CD4-positive, alpha-beta T cell (primary cell): ENCODE measurements at regions of chr5 and their contacts with region 1.

Region 1: DNA sequence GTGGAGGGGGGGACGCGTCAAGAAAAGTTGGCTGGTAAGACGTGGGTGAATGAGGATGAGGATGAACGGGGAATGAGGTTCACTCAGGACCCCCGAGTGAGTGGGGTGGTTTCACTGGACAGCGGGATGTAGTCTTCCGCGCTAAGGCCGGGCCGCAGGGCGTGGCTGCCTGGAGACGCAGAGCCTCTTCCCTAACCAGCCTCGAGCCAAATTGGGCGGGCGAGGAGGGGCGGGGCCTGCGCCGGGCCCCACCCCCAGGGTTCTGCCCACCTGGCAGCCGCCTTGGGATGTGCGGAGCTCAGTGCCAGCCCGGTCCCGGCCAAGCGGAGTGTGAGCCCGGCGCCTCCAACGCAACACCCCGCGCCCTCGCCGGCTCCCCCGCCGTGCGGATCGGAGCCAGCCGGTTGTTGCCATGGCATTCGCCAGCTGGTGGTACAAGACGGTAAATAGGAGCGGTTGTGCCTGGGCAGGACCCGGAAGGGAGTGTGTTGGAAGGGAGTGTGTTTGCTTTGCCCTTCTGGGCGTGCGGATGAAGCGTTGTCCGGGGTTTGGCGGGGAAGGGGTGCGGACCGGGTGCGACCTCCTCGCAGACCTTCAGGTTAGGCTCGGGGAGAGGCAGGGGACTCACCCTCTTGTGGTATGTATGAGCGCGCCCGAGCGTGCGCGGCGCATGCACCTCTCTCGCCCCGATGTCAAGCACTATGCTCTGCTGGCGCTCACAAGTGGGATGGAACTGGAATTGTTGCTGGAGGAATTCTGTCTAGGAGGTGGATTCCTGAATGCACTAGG is 743 bp downstream of the CAST start:
- DNase-seq: peak; percentile 55 to 93 (median 80)
- ATAC-seq: peak; percentile 72
- H3K4me3 ChIP-seq: peak overlapping the region; percentile 88
- H3K4me3 Mint-ChIP-seq: peak overlapping the region; percentile 96
- H3K27ac ChIP-seq: peak overlapping the region; percentile 68 to 77
- H3K27ac Mint-ChIP-seq: peak overlapping the region; percentile 95
- H3K4me1 ChIP-seq: peaks cover 25% of the 10 kb centered on the region
- H3K4me1 Mint-ChIP-seq: peaks cover 57% of the 10 kb centered on the region
- H3K27me3 ChIP-seq: no peaks in the 10 kb centered on the region
- H3K27me3 Mint-ChIP-seq: no peaks in the 10 kb centered on the region
- CTCF ChIP-seq: no peak

Region 2: DNA sequence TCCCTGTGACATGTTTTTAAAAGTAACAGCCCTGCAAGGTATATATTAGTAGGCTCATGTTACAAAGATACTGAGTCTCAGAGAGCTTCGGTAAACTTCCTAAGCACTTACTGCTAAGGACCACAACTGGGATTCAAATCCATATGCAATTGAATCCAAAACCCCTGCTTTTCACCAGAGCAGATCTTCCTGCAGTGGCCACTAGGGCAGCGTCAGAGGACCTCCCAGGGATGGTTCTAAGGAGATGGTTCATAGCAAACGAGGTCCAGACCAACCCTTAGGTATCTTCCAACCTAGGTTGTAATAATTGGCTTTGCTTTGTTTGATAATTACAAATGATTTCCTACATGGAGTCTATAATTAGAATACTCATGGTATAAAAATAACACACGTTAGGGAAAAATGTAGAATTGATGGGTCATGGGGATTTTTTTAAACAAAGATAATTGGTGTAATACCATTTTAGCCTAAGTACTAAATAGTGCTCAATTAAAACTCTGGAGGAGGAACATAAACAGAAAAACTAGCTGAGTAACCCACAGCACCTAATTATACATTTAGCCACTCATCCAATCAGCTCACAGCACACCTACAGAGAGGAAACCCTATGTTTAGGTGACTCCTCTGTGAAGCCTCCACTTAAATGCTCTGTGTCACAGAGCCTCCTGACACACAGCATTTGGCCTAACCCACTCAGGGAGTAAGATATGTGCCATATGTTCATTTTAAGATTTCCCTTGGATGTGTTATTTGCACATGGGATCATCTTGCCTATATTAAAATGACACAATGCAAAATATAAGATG is 10.8 kb before region 1 on chr5:
- CTCF ChIA-PET with region 1: no interaction called
- POLR2A ChIA-PET with region 1: interaction called, 10 read pairs
- intact Hi-C with region 1: no loop called
- DNase-seq: peak in 3 of 14 experiments; percentile 26 to 38 (median 26)
- ATAC-seq: peak; percentile 59
- H3K4me3 ChIP-seq: no peak overlapping the region
- H3K4me3 Mint-ChIP-seq: no peak overlapping the region
- H3K27ac ChIP-seq: no peak overlapping the region
- H3K27ac Mint-ChIP-seq: no peak overlapping the region
- H3K4me1 ChIP-seq: peaks cover 12% of the 10 kb centered on the region
- H3K4me1 Mint-ChIP-seq: peaks cover 7% of the 10 kb centered on the region
- H3K27me3 ChIP-seq: no peaks in the 10 kb centered on the region
- H3K27me3 Mint-ChIP-seq: peaks cover 25% of the 10 kb centered on the region
- CTCF ChIP-seq: peak; percentile 23

Region 3: DNA sequence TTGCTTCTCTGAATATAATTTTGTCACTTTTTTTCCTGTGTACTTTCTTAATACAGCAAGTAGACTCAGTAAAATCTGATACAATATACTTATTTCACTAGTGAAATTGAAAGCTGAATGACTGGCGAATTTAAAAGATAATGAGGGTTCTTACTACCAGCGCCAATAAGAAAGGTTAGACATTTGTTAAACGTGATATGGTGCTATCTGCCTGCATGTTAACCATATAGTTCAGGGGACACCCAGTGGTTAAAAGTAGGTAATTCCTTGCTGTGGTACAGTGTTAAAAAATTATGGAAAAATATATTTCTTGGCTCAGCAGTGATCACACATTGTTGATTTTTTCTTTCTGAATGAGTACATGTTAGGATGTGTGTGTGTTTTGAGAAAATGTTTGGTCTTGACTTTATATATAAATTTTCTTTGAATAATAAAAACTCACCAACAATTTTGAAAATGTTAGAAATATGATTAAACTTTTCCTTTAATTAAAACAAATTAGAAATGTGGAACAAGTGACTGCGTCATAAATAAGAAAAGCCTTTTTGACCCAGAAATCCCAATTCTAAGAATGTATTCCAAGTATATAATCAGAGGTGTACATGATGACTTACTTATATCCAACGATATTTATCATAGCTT is 25.0 kb after region 1 on chr5:
- CTCF ChIA-PET with region 1: no interaction called
- POLR2A ChIA-PET with region 1: interaction called, 4 read pairs
- intact Hi-C with region 1: loop called in 1 of 2 experiments (anchors 2 kb)
- DNase-seq: peak in 3 of 14 experiments; percentile 44 to 59 (median 59)
- ATAC-seq: peak; percentile 99
- H3K4me3 ChIP-seq: no peak overlapping the region
- H3K4me3 Mint-ChIP-seq: peak overlapping the region; percentile 48
- H3K27ac ChIP-seq: no peak overlapping the region
- H3K27ac Mint-ChIP-seq: no peak overlapping the region
- H3K4me1 ChIP-seq: peaks cover 3% of the 10 kb centered on the region
- H3K4me1 Mint-ChIP-seq: peaks cover 30% of the 10 kb centered on the region
- H3K27me3 ChIP-seq: no peaks in the 10 kb centered on the region
- H3K27me3 Mint-ChIP-seq: no peaks in the 10 kb centered on the region
- CTCF ChIP-seq: peak; percentile 68

Region 4: DNA sequence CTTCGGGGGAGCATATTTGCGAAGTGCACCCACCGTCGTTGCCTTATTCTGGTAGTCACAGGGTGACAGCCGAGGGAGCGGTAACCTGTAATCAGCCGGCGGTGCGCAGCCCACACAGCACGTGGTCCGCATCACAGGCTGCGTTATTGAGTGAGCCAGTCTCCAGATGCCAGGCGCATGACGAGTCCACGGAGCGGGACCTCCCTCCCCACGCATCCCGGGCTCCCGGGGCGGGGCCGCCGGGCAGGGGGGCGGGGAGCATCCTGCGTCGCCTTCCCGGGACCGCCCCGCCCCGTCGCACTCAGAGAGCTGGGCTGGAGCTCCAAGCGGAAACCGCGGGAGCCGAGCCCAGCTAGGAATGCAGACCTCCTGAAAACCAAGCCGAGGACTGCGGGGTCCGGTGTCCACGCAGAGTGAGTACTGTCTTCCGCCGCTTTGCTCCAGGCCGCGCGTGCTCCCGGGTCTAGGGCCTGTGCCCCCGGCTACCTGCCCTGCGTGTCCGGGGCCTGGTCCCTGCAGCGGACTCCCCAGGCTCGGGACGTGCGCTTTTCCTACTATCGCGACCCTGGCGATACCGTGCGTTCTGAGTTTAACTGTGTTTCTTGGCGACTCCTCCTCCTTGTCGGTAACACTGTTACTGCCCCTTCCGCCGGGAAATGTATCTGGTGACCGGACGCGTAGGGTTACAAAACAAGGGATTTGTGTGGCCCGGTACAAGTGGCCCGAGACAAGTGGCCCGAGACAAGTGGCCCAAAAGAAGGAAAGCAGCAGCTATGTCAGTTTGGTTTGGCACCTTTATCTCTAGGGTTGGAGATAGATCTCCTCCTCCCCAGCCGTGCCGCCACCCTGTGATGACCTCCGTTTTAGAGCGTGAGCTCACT is 39.8 kb after region 1 on chr5:
- CTCF ChIA-PET with region 1: interaction called, 9 read pairs
- POLR2A ChIA-PET with region 1: interaction called, 37 read pairs
- intact Hi-C with region 1: loop called (anchors 1 to 5 kb)
- DNase-seq: peak; percentile 50 to 90 (median 70)
- ATAC-seq: peak; percentile 81
- H3K4me3 ChIP-seq: peak overlapping the region; percentile 64
- H3K4me3 Mint-ChIP-seq: peak overlapping the region; percentile 90
- H3K27ac ChIP-seq: peak overlapping the region; percentile 69 to 91
- H3K27ac Mint-ChIP-seq: peak overlapping the region; percentile 87
- H3K4me1 ChIP-seq: peaks cover 23% of the 10 kb centered on the region
- H3K4me1 Mint-ChIP-seq: peaks cover 45% of the 10 kb centered on the region
- H3K27me3 ChIP-seq: no peaks in the 10 kb centered on the region
- H3K27me3 Mint-ChIP-seq: no peaks in the 10 kb centered on the region
- CTCF ChIP-seq: no peak

Region 5: GRCh38 chr5:96714951-96715451 is 52.1 kb after region 1 on chr5:
- CTCF ChIA-PET with region 1: no interaction called
- POLR2A ChIA-PET with region 1: interaction called, 8 read pairs
- intact Hi-C with region 1: loop called in 1 of 2 experiments (anchors 5 kb)
- DNase-seq: peak in 8 of 14 experiments; percentile 16 to 82 (median 40)
- ATAC-seq: peak; percentile 81
- H3K4me3 ChIP-seq: no peak overlapping the region
- H3K4me3 Mint-ChIP-seq: peak overlapping the region; percentile 36
- H3K27ac ChIP-seq: peak overlapping the region in 1 of 2 donors; percentile 43
- H3K27ac Mint-ChIP-seq: peak overlapping the region; percentile 88
- H3K4me1 ChIP-seq: peaks cover 15% of the 10 kb centered on the region
- H3K4me1 Mint-ChIP-seq: peaks cover 75% of the 10 kb centered on the region
- H3K27me3 ChIP-seq: no peaks in the 10 kb centered on the region
- H3K27me3 Mint-ChIP-seq: no peaks in the 10 kb centered on the region
- CTCF ChIP-seq: no peak

Region 6: DNA sequence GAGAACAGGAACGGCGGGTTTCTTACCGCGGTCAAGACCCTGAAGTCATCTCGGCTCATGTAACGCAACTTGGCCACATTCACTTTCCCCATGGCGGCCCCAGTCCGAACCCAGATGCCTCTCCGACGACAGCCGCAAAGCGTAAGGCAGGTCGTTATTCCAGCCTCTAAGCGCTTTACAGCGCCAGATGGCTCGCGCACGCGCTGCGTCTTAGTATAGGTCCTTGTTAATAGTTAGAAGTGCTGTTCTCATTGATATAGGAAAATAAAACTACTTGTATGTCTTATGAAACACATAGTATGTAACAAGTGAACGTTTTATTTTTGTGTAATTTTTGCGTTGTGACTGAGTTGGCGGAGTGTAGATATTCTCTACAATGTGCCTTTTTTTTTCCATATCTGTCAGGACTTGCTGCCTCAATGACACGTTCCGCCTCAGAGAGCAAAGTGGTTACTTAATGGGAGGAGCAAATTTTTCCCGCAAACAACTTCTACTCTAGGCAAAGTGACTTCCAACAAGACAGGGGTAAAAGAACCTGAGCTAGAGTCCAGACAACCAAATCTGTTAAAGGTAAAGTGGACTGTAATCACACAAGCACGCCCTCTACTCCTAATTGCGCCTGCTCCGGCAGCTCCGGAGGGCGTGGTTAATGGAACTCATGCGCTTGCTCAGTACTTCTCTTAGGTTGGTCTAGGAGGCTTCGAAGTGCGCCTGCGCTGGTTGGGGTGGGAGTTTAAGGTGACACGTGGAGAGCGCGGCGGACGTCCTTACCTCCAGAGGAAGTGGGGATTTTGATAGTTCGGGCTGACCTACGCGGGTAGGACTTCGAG is 520.4 kb after region 1 on chr5 and contains the start of gene RIOK2:
- CTCF ChIA-PET with region 1: no interaction called
- POLR2A ChIA-PET with region 1: interaction called, 12 read pairs
- intact Hi-C with region 1: loop called in 1 of 2 experiments (anchors 5 kb)
- DNase-seq: peak; percentile 81 to 96 (median 90)
- ATAC-seq: peak; percentile 91
- H3K4me3 ChIP-seq: peak within 1 kb of the TSS; percentile 73
- H3K4me3 Mint-ChIP-seq: peak within 1 kb of the TSS; percentile 97
- H3K27ac ChIP-seq: peak within 1 kb of the TSS; percentile 90 to 96
- H3K27ac Mint-ChIP-seq: peak within 1 kb of the TSS; percentile 98
- H3K4me1 ChIP-seq: peaks cover 11% of the 10 kb centered on the region
- H3K4me1 Mint-ChIP-seq: peaks cover 44% of the 10 kb centered on the region
- H3K27me3 ChIP-seq: no peaks in the 10 kb centered on the region
- H3K27me3 Mint-ChIP-seq: no peaks in the 10 kb centered on the region
- CTCF ChIP-seq: no peak
- total RNA-seq, gene RIOK2: 25.1 to 26.0 TPM